Dorsolateral prefrontal cortex (tissue), 120 donors: ENCODE measurements at regions of chrX and their contacts with region 1.

Region 1: GRCh38 chrX:318739-319578 is at the start of gene GTPBP6:
- DNase-seq: peak; percentile 99 to 100 (median 100)
- H3K4me3 ChIP-seq: peak within 1 kb of the TSS; percentile 68 to 100 (median 93)
- H3K27ac ChIP-seq: peak within 1 kb of the TSS in 58 of 59 donors; percentile 58 to 97 (median 92)
- H3K27me3 ChIP-seq: peaks cover 0 to 4% (median 0%) of the 10 kb centered on the region in 45 donors
- CTCF ChIP-seq: peak in 54 of 56 donors; percentile 15 to 78 (median 54)
- total RNA-seq, gene GTPBP6: 33.8 to 91.4 (median 51.5) TPM

Region 2: GRCh38 chrX:283115-283845 is 35.7 kb before region 1 on chrX:
- intact Hi-C with region 1: loop called in 1 of 2 experiments (anchors 5 kb)
- DNase-seq: peak; percentile 69 to 94 (median 90)
- H3K4me3 ChIP-seq: peak overlapping the region; percentile 34 to 77 (median 62)
- H3K27ac ChIP-seq: peak overlapping the region in 36 of 59 donors; percentile 17 to 88 (median 66)
- H3K27me3 ChIP-seq: peaks cover 0 to 10% (median 0%) of the 10 kb centered on the region in 45 donors
- CTCF ChIP-seq: no peak

Region 3: GRCh38 chrX:386768-387575 is 68.0 kb after region 1 on chrX and contains the start of gene PPP2R3B:
- intact Hi-C with region 1: loop called (anchors 1 to 5 kb)
- DNase-seq: peak; percentile 91 to 99 (median 98)
- H3K4me3 ChIP-seq: peak within 1 kb of the TSS; percentile 65 to 100 (median 89)
- H3K27ac ChIP-seq: peak within 1 kb of the TSS; percentile 90 to 100 (median 99)
- H3K27me3 ChIP-seq: no peaks in the 10 kb centered on the region
- CTCF ChIP-seq: peak in 14 of 56 donors; percentile 4 to 42 (median 19)
- total RNA-seq, gene PPP2R3B: 5.9 to 41.0 (median 18.3) TPM